SK-N-SH (cell line): ENCODE measurements at regions of chr1 and their contacts with region 1.

Region 1: DNA sequence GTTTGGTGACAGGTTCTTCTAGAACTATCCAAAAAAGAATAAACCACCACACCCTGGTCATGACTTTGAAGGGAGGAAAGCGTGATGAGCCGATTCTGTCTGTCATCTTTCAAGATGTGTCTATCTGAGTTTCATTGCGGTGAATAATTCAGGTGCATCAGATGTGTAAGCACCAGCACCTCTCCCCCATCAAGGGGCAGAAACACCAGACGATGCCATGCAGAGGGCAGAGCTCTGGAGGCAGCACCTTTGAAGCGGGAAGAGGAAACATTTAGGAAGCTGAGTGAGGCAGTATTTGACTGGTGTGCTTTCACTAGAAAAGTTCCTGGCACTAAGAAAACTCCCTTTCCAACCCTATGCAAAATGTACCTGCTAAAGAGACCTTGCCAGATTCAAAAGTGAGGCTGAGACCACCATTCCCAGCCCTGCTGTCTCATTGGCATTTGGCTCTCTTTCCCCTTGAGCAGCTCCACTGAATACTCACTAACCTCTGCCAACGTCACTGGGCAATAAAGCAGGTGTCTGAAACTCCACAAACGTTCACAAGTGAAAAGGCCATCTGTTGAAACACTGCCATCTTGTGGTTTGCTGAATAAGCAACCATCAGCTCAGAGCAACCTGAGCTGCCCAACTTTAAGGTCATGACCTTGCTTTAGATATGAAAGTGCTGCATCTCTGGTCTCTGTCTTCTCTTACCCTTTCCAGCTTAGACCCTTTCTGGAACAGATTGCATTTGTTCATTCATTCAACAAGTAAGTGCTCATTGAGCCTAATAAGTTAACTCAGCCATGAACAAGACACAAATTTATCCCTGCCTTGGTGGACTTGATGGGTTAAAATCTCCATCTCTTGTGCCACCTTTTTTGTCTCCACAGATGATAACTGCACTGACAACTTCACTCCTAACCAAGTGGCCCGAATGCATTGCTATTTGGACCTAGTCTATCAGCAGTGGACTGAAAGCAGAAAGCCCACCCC is 228.6 kb downstream of the PAPPA2 start:
- DNase-seq: peak; percentile 35
- H3K4me3 ChIP-seq: no peak overlapping the region
- H3K27ac ChIP-seq: peak overlapping the region in 1 of 2 experiments; percentile 43; a peak in 2 of 4 replicates
- H3K4me1 ChIP-seq: peaks cover 0 to 23% of the 10 kb centered on the region in 2 experiments; a peak in 1 of 4 replicates
- H3K27me3 ChIP-seq: no peaks in the 10 kb centered on the region
- CTCF ChIP-seq: peak; percentile 70
- EP300 ChIP-seq: no peak
- RAD21 ChIP-seq: peak; percentile 80

Region 2: GRCh38 chr1:176605176-176605575 is 86.4 kb before region 1 on chr1:
- CTCF ChIA-PET with region 1: interaction called, 11 read pairs
- POLR2A ChIA-PET with region 1: no interaction called
- DNase-seq: no peak
- H3K4me3 ChIP-seq: no peak overlapping the region
- H3K27ac ChIP-seq: no peak overlapping the region
- H3K4me1 ChIP-seq: peaks cover 0 to 5% of the 10 kb centered on the region in 2 experiments; a peak in 1 of 4 replicates
- H3K27me3 ChIP-seq: no peaks in the 10 kb centered on the region
- CTCF ChIP-seq: no peak
- EP300 ChIP-seq: peak in 1 of 2 experiments; percentile 37; a peak in 1 of 4 replicates
- RAD21 ChIP-seq: peak; percentile 48

Region 3: DNA sequence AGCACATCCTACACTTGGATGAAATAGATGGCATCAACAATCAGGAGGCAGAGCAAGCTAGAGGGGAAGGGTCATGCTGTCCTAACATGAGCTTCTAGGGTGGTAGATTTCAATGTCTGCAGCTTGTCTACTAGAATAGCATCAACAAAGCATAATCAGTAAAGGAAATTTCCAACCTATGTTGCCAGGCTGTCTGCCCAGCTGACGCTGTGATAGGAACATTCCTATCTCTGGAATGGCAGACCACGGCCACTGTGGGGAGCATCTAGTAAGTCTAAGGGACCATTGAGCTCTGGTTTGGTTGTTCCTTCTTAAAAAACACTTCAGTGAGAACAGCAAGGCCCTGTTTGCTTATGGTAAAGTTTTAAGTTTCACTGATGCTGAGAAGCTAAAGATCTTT is 21.8 kb before region 1 on chr1:
- CTCF ChIA-PET with region 1: interaction called, 13 read pairs
- POLR2A ChIA-PET with region 1: no interaction called
- DNase-seq: no peak
- H3K4me3 ChIP-seq: no peak overlapping the region
- H3K27ac ChIP-seq: no peak overlapping the region
- H3K4me1 ChIP-seq: no peaks in the 10 kb centered on the region
- H3K27me3 ChIP-seq: no peaks in the 10 kb centered on the region
- CTCF ChIP-seq: no peak
- EP300 ChIP-seq: no peak
- RAD21 ChIP-seq: no peak

Region 4: DNA sequence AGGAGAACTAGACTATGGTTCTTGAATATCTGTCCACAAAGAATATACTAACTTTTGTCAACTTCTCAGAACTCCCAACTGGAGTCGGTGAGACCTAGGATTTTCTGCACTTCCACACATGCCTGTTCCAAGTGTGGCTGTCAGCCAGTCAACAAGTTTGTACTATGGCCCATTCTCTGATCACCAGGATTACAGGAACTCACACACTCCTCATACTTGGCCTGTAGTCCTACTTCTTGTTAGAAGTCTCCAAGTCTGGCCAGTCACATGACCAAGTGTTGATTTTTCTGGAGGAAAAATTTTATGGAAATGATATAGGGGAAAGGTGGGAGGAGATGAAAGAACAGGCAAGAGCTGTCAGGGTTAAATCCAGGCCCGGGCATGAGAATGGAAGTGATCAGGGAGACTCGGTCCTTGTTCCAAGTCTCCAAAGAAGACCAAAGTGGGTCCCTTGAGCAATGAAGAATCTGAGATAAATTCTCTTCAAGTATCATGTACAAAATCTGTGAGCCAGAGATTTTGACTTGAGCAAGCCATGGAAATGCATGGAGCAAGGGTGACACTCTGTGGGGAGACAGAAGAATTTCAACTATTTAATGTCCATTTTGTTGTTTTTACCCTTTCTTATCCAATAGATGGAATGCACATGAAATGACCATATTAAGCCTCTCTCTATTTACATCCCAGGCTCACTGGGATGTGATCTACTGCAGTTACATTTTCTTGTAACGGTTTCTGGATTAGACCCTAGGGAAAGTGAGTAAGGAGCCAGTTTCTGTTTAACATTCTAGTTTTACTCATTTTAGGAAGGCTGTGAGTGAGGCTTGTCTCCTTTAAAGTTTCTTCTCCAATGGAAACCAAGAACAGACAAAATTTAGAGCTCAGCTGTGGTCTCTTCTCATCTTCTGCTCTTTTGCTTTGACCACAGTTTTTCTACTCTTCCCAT is 152.1 kb after region 1 on chr1:
- CTCF ChIA-PET with region 1: interaction called, 24 read pairs
- POLR2A ChIA-PET with region 1: no interaction called
- DNase-seq: peak; percentile 37
- H3K4me3 ChIP-seq: no peak overlapping the region; a peak in 1 of 4 replicates
- H3K27ac ChIP-seq: no peak overlapping the region
- H3K4me1 ChIP-seq: peaks cover 0 to 10% of the 10 kb centered on the region in 2 experiments; a peak in 2 of 4 replicates
- H3K27me3 ChIP-seq: no peaks in the 10 kb centered on the region
- CTCF ChIP-seq: peak; percentile 54
- EP300 ChIP-seq: no peak
- RAD21 ChIP-seq: peak; percentile 97

Region 5: DNA sequence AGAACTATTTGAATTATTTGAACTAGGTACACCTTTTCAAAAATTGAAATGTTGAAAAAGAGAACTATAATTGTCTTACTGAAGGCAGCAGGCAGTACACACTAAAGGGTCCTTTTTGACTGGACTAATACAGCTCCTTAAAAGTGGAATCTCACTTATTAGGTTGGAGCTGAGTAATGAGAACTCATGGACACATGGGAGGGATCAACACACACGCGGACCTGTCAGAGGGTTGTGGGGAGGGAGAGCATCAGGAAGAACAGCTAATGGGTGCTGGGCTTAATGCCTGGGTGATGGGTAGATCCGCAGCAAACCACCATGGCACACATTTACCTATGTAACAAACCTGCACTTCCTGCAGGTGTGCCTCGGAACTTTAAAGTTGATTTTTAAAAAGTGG is 624.2 kb after region 1 on chr1:
- CTCF ChIA-PET with region 1: no interaction called
- POLR2A ChIA-PET with region 1: no interaction called
- DNase-seq: no peak
- H3K4me3 ChIP-seq: no peak overlapping the region
- H3K27ac ChIP-seq: no peak overlapping the region
- H3K4me1 ChIP-seq: peaks cover 0 to 4% of the 10 kb centered on the region in 2 experiments; a peak in 1 of 4 replicates
- H3K27me3 ChIP-seq: no peaks in the 10 kb centered on the region
- CTCF ChIP-seq: no peak
- EP300 ChIP-seq: no peak
- RAD21 ChIP-seq: no peak